ENCODE measurements at regions of chr5 and their contacts with region 1.

Region 1: GRCh38 chr5:137660349-137660817 is 75.5 kb downstream of the KLHL3 start:
- DNase-seq: peak; percentile 63 to 70 (median 69)
- H3K4me3 ChIP-seq: no peak overlapping the region
- H3K4me3 Mint-ChIP-seq: peak overlapping the region in 1 of 8 donors; percentile 1
- H3K27ac ChIP-seq: no peak overlapping the region
- H3K27ac Mint-ChIP-seq: peak overlapping the region in 3 of 7 donors; percentile 3 to 40 (median 25)
- H3K4me1 ChIP-seq: peaks cover 4% of the 10 kb centered on the region
- H3K4me1 Mint-ChIP-seq: peaks cover 3 to 11% (median 9%) of the 10 kb centered on the region in 4 donors
- H3K27me3 ChIP-seq: no peaks in the 10 kb centered on the region
- H3K27me3 Mint-ChIP-seq: no peaks in the 10 kb centered on the region

Region 2: DNA sequence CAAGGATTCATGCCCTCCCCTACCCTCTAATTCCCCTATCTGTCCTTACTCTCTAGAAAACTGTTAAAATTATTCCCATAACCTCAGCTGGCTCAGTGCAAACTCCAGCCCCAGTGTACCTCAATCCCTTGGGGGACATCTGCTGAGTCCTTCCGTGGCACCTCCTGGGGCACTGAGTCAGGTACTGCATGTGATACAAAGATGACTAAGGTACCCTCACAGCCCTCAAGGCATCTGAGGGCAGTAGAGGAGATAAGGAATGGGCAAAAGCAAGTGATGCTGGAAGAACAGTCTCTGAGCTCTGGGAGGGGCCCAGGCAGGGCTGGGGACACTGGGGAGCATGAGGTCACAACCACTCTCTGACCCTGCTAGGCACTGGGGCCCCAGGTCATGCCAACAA is 13.2 kb after region 1 on chr5:
- CTCF ChIA-PET with region 1: interaction called, 28 read pairs
- POLR2A ChIA-PET with region 1: no interaction called
- intact Hi-C with region 1: no loop called
- DNase-seq: no peak
- H3K4me3 ChIP-seq: no peak overlapping the region
- H3K4me3 Mint-ChIP-seq: no peak overlapping the region
- H3K27ac ChIP-seq: no peak overlapping the region
- H3K27ac Mint-ChIP-seq: peak overlapping the region in 1 of 7 donors; percentile 69
- H3K4me1 ChIP-seq: no peaks in the 10 kb centered on the region
- H3K4me1 Mint-ChIP-seq: peaks cover 0 to 2% (median 0%) of the 10 kb centered on the region in 4 donors
- H3K27me3 ChIP-seq: no peaks in the 10 kb centered on the region
- H3K27me3 Mint-ChIP-seq: no peaks in the 10 kb centered on the region

Region 3: DNA sequence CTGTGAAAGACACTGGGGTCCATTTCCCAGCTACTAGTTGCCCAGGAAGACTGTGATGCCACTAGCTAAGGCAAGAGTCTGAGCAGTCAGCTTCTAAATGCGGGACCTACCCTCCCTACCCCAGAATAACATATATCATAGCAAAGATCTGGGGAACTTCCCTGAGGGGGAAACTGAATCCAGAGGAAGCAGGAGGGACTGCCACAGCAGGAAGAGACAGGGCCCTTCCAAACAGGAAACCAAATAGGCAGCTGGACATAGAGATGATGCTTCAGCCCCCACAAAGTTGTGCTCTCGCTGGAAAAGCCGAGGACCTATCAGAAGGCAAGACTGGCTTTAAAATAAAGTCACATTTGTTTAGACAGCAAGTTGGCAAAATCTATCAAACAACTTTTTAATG is 24.4 kb after region 1 on chr5:
- CTCF ChIA-PET with region 1: interaction called, 15 read pairs
- POLR2A ChIA-PET with region 1: no interaction called
- intact Hi-C with region 1: no loop called
- DNase-seq: no peak
- H3K4me3 ChIP-seq: no peak overlapping the region
- H3K4me3 Mint-ChIP-seq: no peak overlapping the region
- H3K27ac ChIP-seq: no peak overlapping the region
- H3K27ac Mint-ChIP-seq: peak overlapping the region in 1 of 7 donors; percentile 30
- H3K4me1 ChIP-seq: no peaks in the 10 kb centered on the region
- H3K4me1 Mint-ChIP-seq: peaks cover 0 to 6% (median 2%) of the 10 kb centered on the region in 4 donors
- H3K27me3 ChIP-seq: no peaks in the 10 kb centered on the region
- H3K27me3 Mint-ChIP-seq: no peaks in the 10 kb centered on the region

Region 4: DNA sequence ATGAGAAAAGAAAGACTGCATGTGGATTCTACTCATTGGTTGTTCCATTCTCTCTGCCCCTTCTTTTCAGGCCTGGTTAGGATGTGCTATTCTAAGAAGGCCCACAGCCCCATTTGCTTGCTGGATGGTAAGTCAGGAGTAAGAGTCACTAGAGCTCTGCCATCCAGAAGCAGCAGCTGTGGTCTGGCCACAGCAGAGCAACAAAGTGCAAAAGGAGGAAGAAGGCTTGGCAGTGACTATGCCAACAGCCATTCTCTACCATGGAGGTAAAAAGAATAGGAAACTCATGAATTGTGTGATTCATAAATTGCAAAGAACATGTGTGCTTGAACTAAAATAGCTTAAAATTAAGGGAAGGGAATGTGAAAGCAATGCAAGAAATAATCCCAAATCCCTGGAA is 54.6 kb after region 1 on chr5:
- CTCF ChIA-PET with region 1: interaction called, 11 read pairs
- POLR2A ChIA-PET with region 1: no interaction called
- intact Hi-C with region 1: no loop called
- DNase-seq: no peak
- H3K4me3 ChIP-seq: no peak overlapping the region
- H3K4me3 Mint-ChIP-seq: no peak overlapping the region
- H3K27ac ChIP-seq: no peak overlapping the region
- H3K27ac Mint-ChIP-seq: no peak overlapping the region
- H3K4me1 ChIP-seq: no peaks in the 10 kb centered on the region
- H3K4me1 Mint-ChIP-seq: peaks cover 0 to 7% (median 2%) of the 10 kb centered on the region in 4 donors
- H3K27me3 ChIP-seq: no peaks in the 10 kb centered on the region
- H3K27me3 Mint-ChIP-seq: no peaks in the 10 kb centered on the region

Region 5: DNA sequence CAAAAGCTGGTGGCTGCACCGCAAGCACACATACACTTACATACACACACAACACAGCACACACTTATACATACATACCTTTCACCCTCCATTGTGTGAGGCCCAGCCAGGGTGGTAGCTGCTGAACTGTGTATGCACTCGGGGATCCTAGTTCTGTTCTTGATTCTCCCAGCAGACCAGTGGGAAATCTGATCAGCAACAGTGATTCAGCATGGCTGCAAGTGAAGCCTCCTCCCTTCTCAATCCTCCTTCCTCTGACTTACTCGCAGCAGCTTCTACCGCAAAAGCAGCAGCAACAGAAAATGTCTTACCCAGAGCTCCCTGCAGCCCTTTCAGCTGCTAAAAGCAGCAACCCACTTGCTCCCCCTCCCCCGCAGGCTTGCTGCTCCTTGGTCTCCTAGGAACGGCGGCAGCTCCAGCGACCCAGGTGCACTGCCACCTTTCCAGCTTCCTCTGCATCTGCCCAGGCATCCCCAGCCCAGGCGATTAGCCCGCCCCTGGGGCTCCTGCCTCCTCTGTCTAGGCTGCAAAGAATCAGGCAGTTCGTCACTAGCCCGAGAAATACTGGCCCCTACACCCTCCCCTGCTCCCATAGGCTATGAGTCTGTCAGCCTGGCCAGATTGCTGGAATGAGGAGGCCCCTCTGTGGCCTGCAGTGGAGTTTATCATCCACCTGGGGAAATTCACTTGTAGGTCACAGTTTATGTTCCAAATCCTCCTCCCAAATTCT is 75.3 kb after region 1 on chr5 and contains the start of gene KLHL3:
- CTCF ChIA-PET with region 1: interaction called, 653 read pairs
- POLR2A ChIA-PET with region 1: interaction called, 31 read pairs
- intact Hi-C with region 1: no loop called
- DNase-seq: peak in 4 of 5 donors; percentile 26 to 39 (median 28)
- H3K4me3 ChIP-seq: peak within 1 kb of the TSS; percentile 61 to 73
- H3K4me3 Mint-ChIP-seq: no peak within 1 kb of the TSS
- H3K27ac ChIP-seq: peak within 1 kb of the TSS; percentile 36
- H3K27ac Mint-ChIP-seq: no peak within 1 kb of the TSS
- H3K4me1 ChIP-seq: peaks cover 68% of the 10 kb centered on the region
- H3K4me1 Mint-ChIP-seq: peaks cover 13 to 20% (median 14%) of the 10 kb centered on the region in 4 donors
- H3K27me3 ChIP-seq: no peaks in the 10 kb centered on the region
- H3K27me3 Mint-ChIP-seq: no peaks in the 10 kb centered on the region
- total RNA-seq, gene KLHL3: 22.0 to 25.9 TPM

Region 6: DNA sequence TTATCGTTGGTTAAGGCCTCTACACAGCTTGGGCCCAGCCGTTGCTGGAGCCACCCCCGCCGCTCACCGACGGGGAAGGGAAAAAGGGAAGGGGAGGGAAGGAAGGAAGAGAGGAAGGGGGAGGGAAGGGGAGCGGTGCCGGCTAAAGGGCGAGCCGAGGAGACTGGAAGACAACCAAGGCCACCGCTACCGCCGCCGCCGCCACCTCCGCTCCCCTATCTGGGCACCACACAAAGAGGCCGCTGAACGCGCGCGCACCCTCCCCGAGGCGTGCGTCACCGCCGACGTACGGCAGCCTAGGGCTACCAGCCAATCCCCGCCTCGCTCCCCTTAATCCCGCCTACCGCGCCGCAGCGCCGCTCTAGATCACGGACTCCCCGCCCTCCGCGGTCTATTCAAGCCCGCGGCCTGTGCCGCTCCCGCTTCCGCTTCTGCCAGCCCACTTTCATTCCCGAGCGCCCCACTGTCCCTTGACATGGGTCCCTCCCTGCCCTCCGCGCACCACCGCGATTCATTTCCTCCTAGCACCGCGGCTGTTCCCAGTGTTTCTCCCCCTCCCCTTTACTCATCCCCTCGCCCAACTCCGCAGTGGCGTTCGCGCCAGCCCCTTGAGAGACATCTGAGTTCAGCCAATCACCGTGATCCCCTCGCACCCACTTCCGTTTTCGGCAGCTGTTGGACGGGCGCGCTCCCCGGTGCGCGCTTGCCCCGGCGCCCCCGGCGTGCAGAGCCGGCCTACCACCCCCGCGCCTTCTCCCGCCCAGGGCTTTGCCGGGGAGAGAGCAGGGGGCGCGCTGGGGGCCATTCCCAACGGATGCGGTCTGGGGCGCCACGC is 94.0 kb after region 1 on chr5 and contains the start of gene HNRNPA0:
- CTCF ChIA-PET with region 1: interaction called, 653 read pairs
- POLR2A ChIA-PET with region 1: interaction called, 29 read pairs
- intact Hi-C with region 1: no loop called
- DNase-seq: peak; percentile 98 to 99 (median 99)
- H3K4me3 ChIP-seq: peak within 1 kb of the TSS; percentile 49 to 96
- H3K4me3 Mint-ChIP-seq: peak within 1 kb of the TSS; percentile 98 to 100 (median 99)
- H3K27ac ChIP-seq: peak within 1 kb of the TSS; percentile 100
- H3K27ac Mint-ChIP-seq: peak within 1 kb of the TSS; percentile 100
- H3K4me1 ChIP-seq: peaks cover 33% of the 10 kb centered on the region
- H3K4me1 Mint-ChIP-seq: peaks cover 26 to 54% (median 34%) of the 10 kb centered on the region in 4 donors
- H3K27me3 ChIP-seq: no peaks in the 10 kb centered on the region
- H3K27me3 Mint-ChIP-seq: peaks cover 0 to 9% of the 10 kb centered on the region in 2 donors
- total RNA-seq, gene HNRNPA0: 30.5 to 30.7 TPM